Right cardiac atrium (tissue), 5 donors: ENCODE measurements at regions of chr1 and their contacts with region 1.

Region 1: GRCh38 chr1:97767381-97767780 is 153.5 kb downstream of the DPYD start:
- DNase-seq: no peak
- ATAC-seq: no peak
- H3K4me3 ChIP-seq: no peak overlapping the region
- H3K27ac ChIP-seq: no peak overlapping the region
- H3K4me1 ChIP-seq: no peaks in the 10 kb centered on the region
- H3K27me3 ChIP-seq: no peaks in the 10 kb centered on the region

Region 2: DNA sequence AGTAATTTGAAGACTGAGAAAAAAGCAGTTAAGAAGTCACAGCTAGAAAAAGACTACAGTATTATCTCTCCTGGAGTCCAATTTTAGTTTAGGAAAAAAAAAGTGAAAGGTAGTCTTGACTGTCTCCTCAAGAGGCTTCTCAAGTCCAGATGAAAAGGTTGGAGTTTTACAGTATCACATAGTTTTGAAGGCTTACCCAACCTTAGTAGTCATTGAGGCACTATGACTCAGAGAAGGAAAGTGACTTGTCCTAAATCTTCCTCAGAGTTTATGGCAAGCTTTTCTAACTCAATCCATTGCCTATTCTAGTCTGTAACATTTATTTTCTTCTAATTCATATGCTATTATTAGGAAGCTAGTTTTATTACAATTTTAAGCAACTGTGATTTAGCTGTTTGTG is 21.5 kb before region 1 on chr1:
- intact Hi-C with region 1: loop called in 1 of 4 experiments (anchors 2 kb)
- DNase-seq: no peak
- ATAC-seq: no peak
- H3K4me3 ChIP-seq: no peak overlapping the region
- H3K27ac ChIP-seq: no peak overlapping the region
- H3K4me1 ChIP-seq: no peaks in the 10 kb centered on the region
- H3K27me3 ChIP-seq: no peaks in the 10 kb centered on the region

Region 3: GRCh38 chr1:97943354-97943753 is 176.0 kb after region 1 on chr1:
- intact Hi-C with region 1: no loop called
- DNase-seq: peak in 1 of 3 donors; percentile 7
- ATAC-seq: peak in 1 of 2 donors; percentile 26
- H3K4me3 ChIP-seq: no peak overlapping the region
- H3K27ac ChIP-seq: no peak overlapping the region
- H3K4me1 ChIP-seq: no peaks in the 10 kb centered on the region
- H3K27me3 ChIP-seq: no peaks in the 10 kb centered on the region